HepG2 (cell line): ENCODE measurements at regions of chr2 and their contacts with region 1.

Region 1: GRCh38 chr2:121974897-121975661 is 219.6 kb downstream of the TSN start:
- DNase-seq: peak; percentile 84
- ATAC-seq: peak; percentile 98
- H3K4me3 ChIP-seq: peak overlapping the region in 1 of 3 experiments; percentile 32; a peak in 1 of 6 replicates
- H3K27ac ChIP-seq: no peak overlapping the region
- H3K4me1 ChIP-seq: no peaks in the 10 kb centered on the region
- H3K27me3 ChIP-seq: peaks cover 0 to 5% of the 10 kb centered on the region in 2 experiments; a peak in 1 of 5 replicates
- CTCF ChIP-seq: peak; percentile 91
- EP300 ChIP-seq: no peak
- POLR2A ChIP-seq: no peak
- RAD21 ChIP-seq: peak; percentile 87

Region 2: GRCh38 chr2:121810959-121811853 is 163.9 kb before region 1 on chr2:
- CTCF ChIA-PET with region 1: no interaction called
- POLR2A ChIA-PET with region 1: no interaction called
- in situ Hi-C with region 1: no loop called
- intact Hi-C with region 1: loop called (anchors 1 kb)
- DNase-seq: peak; percentile 69
- ATAC-seq: peak; percentile 97
- H3K4me3 ChIP-seq: no peak overlapping the region
- H3K27ac ChIP-seq: no peak overlapping the region
- H3K4me1 ChIP-seq: peaks cover 14% of the 10 kb centered on the region
- H3K27me3 ChIP-seq: no peaks in the 10 kb centered on the region
- CTCF ChIP-seq: peak; percentile 89
- EP300 ChIP-seq: no peak
- POLR2A ChIP-seq: no peak
- RAD21 ChIP-seq: peak; percentile 74

Region 3: GRCh38 chr2:121866789-121867188 is 108.3 kb before region 1 on chr2:
- CTCF ChIA-PET with region 1: no interaction called
- POLR2A ChIA-PET with region 1: no interaction called
- in situ Hi-C with region 1: no loop called
- intact Hi-C with region 1: no loop called
- DNase-seq: no peak
- ATAC-seq: no peak
- H3K4me3 ChIP-seq: no peak overlapping the region
- H3K27ac ChIP-seq: no peak overlapping the region
- H3K4me1 ChIP-seq: peaks cover 5% of the 10 kb centered on the region; the same call in 1 of the 2 replicates
- H3K27me3 ChIP-seq: peaks cover 0 to 7% of the 10 kb centered on the region in 2 experiments; a peak in 4 of 5 replicates
- CTCF ChIP-seq: no peak
- EP300 ChIP-seq: no peak
- POLR2A ChIP-seq: no peak
- RAD21 ChIP-seq: no peak

Region 4: GRCh38 chr2:121992700-121993099 is 17.6 kb after region 1 on chr2:
- CTCF ChIA-PET with region 1: no interaction called
- POLR2A ChIA-PET with region 1: no interaction called
- in situ Hi-C with region 1: no loop called
- intact Hi-C with region 1: no loop called
- DNase-seq: no peak
- ATAC-seq: no peak
- H3K4me3 ChIP-seq: no peak overlapping the region
- H3K27ac ChIP-seq: no peak overlapping the region
- H3K4me1 ChIP-seq: no peaks in the 10 kb centered on the region
- H3K27me3 ChIP-seq: no peaks in the 10 kb centered on the region; a peak in 1 of 5 replicates
- CTCF ChIP-seq: no peak
- EP300 ChIP-seq: no peak
- POLR2A ChIP-seq: no peak
- RAD21 ChIP-seq: no peak

Region 5: DNA sequence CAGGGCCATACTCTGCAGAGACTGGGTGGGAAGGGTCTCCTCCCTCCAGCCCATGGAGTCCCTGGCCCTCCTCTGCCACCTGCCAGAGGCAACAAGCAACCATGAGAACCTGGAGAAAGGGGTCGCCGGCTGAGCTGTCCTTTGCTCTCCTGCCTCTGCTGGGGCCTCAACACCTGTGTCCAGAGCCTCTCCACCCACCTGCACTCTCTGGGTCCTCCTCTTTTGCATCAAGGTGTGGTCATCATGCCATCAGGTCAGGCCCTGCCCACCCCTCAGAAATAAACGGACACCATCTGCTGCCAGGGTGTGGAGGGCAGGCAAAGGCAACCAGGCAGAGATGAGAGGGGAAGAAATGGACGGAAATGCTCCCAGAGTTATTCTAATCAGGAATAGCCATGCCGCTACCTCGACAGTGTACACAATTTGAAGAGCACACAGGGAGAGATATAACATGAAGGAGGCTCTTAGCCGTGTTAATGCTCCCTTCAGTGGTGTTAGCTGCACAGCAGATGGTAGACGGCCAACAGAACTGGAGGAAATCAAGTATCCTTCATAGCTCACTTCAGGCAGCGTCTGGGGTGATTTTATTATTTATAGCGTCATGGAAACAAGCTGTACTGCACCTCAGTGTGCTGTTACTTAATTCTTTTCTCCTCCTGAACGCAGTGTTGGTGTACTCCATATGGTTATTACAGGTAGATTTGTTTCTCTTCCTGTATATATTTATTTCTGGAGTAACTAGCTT is 28.3 kb after region 1 on chr2:
- CTCF ChIA-PET with region 1: no interaction called
- POLR2A ChIA-PET with region 1: no interaction called
- in situ Hi-C with region 1: no loop called
- intact Hi-C with region 1: no loop called
- DNase-seq: no peak
- ATAC-seq: no peak
- H3K4me3 ChIP-seq: no peak overlapping the region
- H3K27ac ChIP-seq: no peak overlapping the region
- H3K4me1 ChIP-seq: no peaks in the 10 kb centered on the region
- H3K27me3 ChIP-seq: no peaks in the 10 kb centered on the region; a peak in 1 of 5 replicates
- CTCF ChIP-seq: no peak
- EP300 ChIP-seq: no peak
- POLR2A ChIP-seq: no peak
- RAD21 ChIP-seq: no peak

Region 6: GRCh38 chr2:122136056-122136455 is 161.0 kb after region 1 on chr2:
- CTCF ChIA-PET with region 1: interaction called, 11 read pairs
- POLR2A ChIA-PET with region 1: no interaction called
- in situ Hi-C with region 1: loop called (anchors 10 kb)
- intact Hi-C with region 1: loop called (anchors 1 kb)
- DNase-seq: peak; percentile 56
- ATAC-seq: peak; percentile 98
- H3K4me3 ChIP-seq: no peak overlapping the region
- H3K27ac ChIP-seq: no peak overlapping the region
- H3K4me1 ChIP-seq: no peaks in the 10 kb centered on the region; the same call in 1 of the 2 replicates
- H3K27me3 ChIP-seq: no peaks in the 10 kb centered on the region
- CTCF ChIP-seq: peak; percentile 70
- EP300 ChIP-seq: no peak
- POLR2A ChIP-seq: no peak
- RAD21 ChIP-seq: no peak

Region 7: GRCh38 chr2:122191341-122191740 is 216.3 kb after region 1 on chr2:
- CTCF ChIA-PET with region 1: no interaction called
- POLR2A ChIA-PET with region 1: no interaction called
- in situ Hi-C with region 1: no loop called
- intact Hi-C with region 1: loop called (anchors 5 kb)
- DNase-seq: peak; percentile 41
- ATAC-seq: peak; percentile 97
- H3K4me3 ChIP-seq: no peak overlapping the region
- H3K27ac ChIP-seq: no peak overlapping the region
- H3K4me1 ChIP-seq: no peaks in the 10 kb centered on the region
- H3K27me3 ChIP-seq: peaks cover 2 to 5% of the 10 kb centered on the region in 2 experiments; a peak in 1 of 5 replicates
- CTCF ChIP-seq: peak; percentile 75
- EP300 ChIP-seq: no peak
- POLR2A ChIP-seq: no peak
- RAD21 ChIP-seq: peak; percentile 34; the same call in 1 of the 2 replicates

Region 8: GRCh38 chr2:122451040-122451439 is 476.0 kb after region 1 on chr2:
- CTCF ChIA-PET with region 1: interaction called, 30 read pairs
- POLR2A ChIA-PET with region 1: no interaction called
- in situ Hi-C with region 1: loop called (anchors 5 kb)
- intact Hi-C with region 1: loop called (anchors 1 kb)
- DNase-seq: peak; percentile 47
- ATAC-seq: peak; percentile 92
- H3K4me3 ChIP-seq: no peak overlapping the region
- H3K27ac ChIP-seq: no peak overlapping the region
- H3K4me1 ChIP-seq: no peaks in the 10 kb centered on the region
- H3K27me3 ChIP-seq: no peaks in the 10 kb centered on the region
- CTCF ChIP-seq: peak; percentile 88
- EP300 ChIP-seq: no peak
- POLR2A ChIP-seq: no peak
- RAD21 ChIP-seq: peak; percentile 66

Region 9: GRCh38 chr2:122523143-122523542 is 548.1 kb after region 1 on chr2:
- CTCF ChIA-PET with region 1: no interaction called
- POLR2A ChIA-PET with region 1: no interaction called
- in situ Hi-C with region 1: no loop called
- intact Hi-C with region 1: loop called (anchors 5 kb)
- DNase-seq: no peak
- ATAC-seq: peak; percentile 34; the same call in 1 of the 3 replicates
- H3K4me3 ChIP-seq: no peak overlapping the region
- H3K27ac ChIP-seq: no peak overlapping the region
- H3K4me1 ChIP-seq: no peaks in the 10 kb centered on the region
- H3K27me3 ChIP-seq: no peaks in the 10 kb centered on the region
- CTCF ChIP-seq: no peak
- EP300 ChIP-seq: no peak
- POLR2A ChIP-seq: no peak
- RAD21 ChIP-seq: no peak